Adrenal gland (tissue), 19 donors: ENCODE measurements at regions of chr5 and their contacts with region 1.

Region 1: DNA sequence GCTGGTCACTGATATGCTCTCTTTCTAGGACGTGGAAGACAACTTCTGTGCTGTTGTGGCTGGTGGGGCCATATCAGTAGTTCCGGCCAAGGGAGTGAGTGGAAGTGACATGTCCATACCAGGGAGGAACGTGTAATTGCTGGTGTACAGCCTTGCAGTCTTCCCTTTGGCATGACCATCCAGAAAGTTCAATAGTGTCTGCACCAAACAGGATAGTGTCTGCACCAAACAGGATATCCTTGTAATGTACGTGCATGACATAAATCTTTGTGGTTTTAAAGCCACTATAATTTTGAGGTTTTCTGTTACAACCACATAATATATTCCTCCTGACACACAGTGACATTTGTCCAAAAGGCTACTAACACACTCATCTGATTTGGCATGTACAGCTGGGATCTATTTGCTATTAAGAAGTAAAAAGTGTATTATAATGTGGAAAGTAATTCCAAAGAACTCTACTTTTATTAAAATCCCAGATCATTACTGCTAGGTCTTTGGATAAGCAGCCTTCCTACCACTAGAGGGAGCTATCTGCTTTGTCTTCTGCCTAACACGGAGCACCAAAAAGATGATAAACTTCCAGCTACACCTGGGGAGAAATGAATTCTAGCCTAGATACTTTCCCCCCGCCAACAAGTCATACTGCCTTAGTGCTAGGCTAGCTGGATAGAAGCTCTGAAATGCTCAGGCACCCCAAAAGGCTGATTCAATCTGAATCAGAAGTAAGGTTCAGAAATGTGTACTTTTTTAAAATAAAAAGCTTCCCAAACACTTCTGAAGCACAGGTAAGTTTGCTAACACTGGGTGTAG is 52.7 kb downstream of the RNF145 start:
- DNase-seq: peak in 5 of 7 donors; percentile 50 to 55 (median 51)
- H3K4me3 ChIP-seq: no peak overlapping the region
- H3K27ac ChIP-seq: no peak overlapping the region
- H3K4me1 ChIP-seq: peaks cover 0 to 14% of the 10 kb centered on the region in 2 donors
- H3K27me3 ChIP-seq: no peaks in the 10 kb centered on the region
- CTCF ChIP-seq: peak; percentile 70 to 90 (median 80)
- POLR2A ChIP-seq: no peak

Region 2: DNA sequence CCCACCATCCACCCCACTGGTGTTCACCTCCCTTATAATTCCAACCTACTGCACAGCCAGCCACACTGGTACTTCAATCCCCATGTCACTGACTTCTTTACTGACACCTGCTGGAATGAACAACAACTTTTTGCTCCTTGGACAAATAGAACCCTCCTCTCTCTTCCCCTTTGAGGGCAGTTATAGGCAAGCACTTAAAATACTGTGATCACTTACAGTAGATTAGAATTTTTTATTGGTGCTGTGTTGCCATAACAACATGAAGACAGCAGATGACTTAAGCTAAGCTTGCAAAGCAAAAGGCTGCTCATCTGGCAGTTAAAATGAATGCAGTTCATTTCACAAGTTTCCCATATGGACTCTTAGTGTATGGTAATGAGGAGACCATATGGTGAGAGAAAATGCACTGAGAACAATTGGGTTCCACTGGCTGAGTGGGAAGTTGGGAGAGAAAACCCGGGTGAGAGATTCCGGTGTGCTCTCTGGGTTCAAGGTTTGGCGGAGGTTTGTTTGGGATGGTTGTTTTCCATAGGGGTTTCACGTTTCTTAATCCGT is 431.3 kb before region 1 on chr5:
- intact Hi-C with region 1: no loop called
- DNase-seq: no peak
- H3K4me3 ChIP-seq: no peak overlapping the region
- H3K27ac ChIP-seq: no peak overlapping the region
- H3K4me1 ChIP-seq: peaks cover 0 to 14% of the 10 kb centered on the region in 2 donors
- H3K27me3 ChIP-seq: no peaks in the 10 kb centered on the region
- CTCF ChIP-seq: no peak
- POLR2A ChIP-seq: no peak

Region 3: DNA sequence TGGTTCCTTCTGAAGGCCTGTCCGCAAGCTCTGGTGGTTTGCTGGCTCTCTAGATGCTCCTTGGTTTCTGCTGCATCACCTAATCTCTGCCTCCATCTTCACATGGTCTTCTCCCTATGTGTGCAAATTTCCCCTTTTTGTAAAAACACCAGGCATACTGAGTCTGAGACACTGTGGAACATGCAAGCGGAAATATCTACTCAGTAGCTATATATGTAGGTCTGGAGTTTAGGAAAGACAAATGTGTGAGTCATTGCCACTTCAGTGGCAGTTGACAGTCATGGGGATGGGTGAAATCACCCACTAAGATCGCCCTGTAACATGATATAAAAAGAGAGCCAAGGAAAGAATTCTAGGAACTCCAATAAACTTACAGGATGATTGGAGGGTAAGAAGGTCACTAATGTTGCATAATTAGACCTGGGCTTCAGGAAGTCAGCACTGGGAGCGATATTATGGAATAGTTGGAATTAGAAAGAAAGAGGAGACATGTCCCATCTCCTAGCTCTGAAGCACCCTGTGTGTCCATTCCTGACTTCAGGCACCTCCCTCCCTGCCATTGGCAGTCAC is 83.8 kb after region 1 on chr5:
- intact Hi-C with region 1: no loop called
- DNase-seq: no peak
- H3K4me3 ChIP-seq: no peak overlapping the region
- H3K27ac ChIP-seq: no peak overlapping the region
- H3K4me1 ChIP-seq: no peaks in the 10 kb centered on the region
- H3K27me3 ChIP-seq: no peaks in the 10 kb centered on the region
- CTCF ChIP-seq: no peak
- POLR2A ChIP-seq: no peak

Region 4: GRCh38 chr5:159262859-159263567 is 106.4 kb after region 1 on chr5 and contains the start of gene UBLCP1:
- intact Hi-C with region 1: loop called in 1 of 2 experiments (anchors 10 kb)
- DNase-seq: peak; percentile 67 to 89 (median 77)
- H3K4me3 ChIP-seq: peak within 1 kb of the TSS; percentile 73 to 87 (median 84)
- H3K27ac ChIP-seq: peak within 1 kb of the TSS; percentile 57 to 92 (median 74)
- H3K4me1 ChIP-seq: peaks cover 0 to 24% of the 10 kb centered on the region in 2 donors
- H3K27me3 ChIP-seq: no peaks in the 10 kb centered on the region
- CTCF ChIP-seq: no peak
- POLR2A ChIP-seq: peak; percentile 8 to 44
- total RNA-seq, gene UBLCP1: 12.7 to 25.5 (median 20.7) TPM

Region 5: DNA sequence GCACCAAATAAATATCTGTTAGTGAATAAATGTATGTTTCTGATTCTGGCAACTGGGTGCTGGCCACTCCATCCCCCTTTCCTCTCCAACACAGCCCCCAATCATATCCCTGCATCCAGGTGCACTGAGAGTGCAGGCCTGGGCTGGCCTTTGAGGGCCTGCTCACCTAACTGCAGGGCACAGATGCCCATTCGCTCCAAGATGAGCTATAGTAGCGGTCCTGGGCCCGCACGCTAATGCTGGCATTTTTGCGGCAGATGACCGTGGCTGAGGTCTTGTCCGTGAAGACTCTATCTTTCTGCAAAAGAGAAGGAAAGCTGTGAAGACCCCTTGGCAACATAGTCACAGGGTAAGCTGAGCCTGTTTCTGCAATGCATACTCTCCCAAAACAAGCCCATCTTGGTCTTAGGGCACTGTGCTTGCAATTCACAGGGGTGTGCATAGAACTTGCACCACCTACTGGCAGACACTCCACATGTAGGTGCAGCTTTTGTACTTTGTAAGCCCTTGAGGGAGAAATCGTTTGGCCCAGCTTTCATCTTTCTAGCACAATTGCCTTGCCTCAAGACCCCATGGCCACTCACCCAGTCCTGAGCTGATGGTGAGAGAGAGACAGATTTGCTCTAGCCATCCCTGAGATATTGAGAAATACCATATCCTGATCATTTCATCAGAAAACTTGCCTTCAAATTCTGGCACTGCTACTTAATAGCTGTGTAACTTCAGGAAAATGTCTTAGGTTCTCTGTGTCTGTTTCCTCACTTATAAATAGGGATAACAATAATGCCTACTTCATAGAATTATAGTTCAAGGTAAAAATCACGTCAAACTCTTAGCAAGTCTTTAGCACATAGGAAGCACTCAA is 160.1 kb after region 1 on chr5:
- intact Hi-C with region 1: loop called (anchors 5 to 10 kb)
- DNase-seq: peak in 5 of 7 donors; percentile 22 to 71 (median 41)
- H3K4me3 ChIP-seq: no peak overlapping the region
- H3K27ac ChIP-seq: no peak overlapping the region
- H3K4me1 ChIP-seq: no peaks in the 10 kb centered on the region
- H3K27me3 ChIP-seq: peaks cover 4% of the 10 kb centered on the region
- CTCF ChIP-seq: peak; percentile 29 to 60 (median 54)
- POLR2A ChIP-seq: no peak

Region 6: DNA sequence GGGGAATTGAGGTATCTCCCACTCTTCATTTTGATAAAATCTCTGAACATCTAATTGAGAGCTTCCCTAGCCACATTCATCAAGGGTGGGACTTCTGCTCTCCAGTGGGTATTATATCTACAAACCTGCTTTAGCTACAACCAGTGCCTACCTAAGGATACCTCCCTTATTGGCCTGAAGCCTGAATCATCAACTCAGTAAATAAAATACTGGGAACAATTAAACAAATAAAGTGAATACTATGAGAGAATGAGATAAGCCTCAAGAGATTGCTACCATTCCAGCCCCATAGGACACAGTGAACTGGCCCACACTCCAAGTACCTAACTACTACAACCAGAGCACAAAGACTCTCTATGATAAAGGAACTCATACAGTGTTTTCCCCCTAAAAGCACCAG is 221.0 kb after region 1 on chr5:
- intact Hi-C with region 1: no loop called
- DNase-seq: no peak
- H3K4me3 ChIP-seq: no peak overlapping the region
- H3K27ac ChIP-seq: no peak overlapping the region
- H3K4me1 ChIP-seq: no peaks in the 10 kb centered on the region
- H3K27me3 ChIP-seq: no peaks in the 10 kb centered on the region
- CTCF ChIP-seq: no peak
- POLR2A ChIP-seq: no peak